Pancreas (tissue), 10 donors: ENCODE measurements at regions of chr1 and their contacts with region 1.

Region 1: GRCh38 chr1:25608488-25609178 is 8.0 kb upstream of the MAN1C1 start:
- DNase-seq: peak; percentile 71 to 89 (median 84)
- ATAC-seq: peak; percentile 91 to 99 (median 96)
- H3K4me3 ChIP-seq: peak overlapping the region in 1 of 4 donors; percentile 32
- H3K27ac ChIP-seq: no peak overlapping the region
- H3K4me1 ChIP-seq: no peaks in the 10 kb centered on the region
- H3K27me3 ChIP-seq: no peaks in the 10 kb centered on the region
- CTCF ChIP-seq: peak; percentile 22 to 53 (median 42)

Region 2: GRCh38 chr1:25754470-25755181 is 146.0 kb after region 1 on chr1:
- intact Hi-C with region 1: no loop called
- DNase-seq: no peak
- ATAC-seq: no peak
- H3K4me3 ChIP-seq: no peak overlapping the region
- H3K27ac ChIP-seq: no peak overlapping the region
- H3K4me1 ChIP-seq: peaks cover 0 to 4% (median 0%) of the 10 kb centered on the region in 3 donors
- H3K27me3 ChIP-seq: no peaks in the 10 kb centered on the region
- CTCF ChIP-seq: no peak

Region 3: DNA sequence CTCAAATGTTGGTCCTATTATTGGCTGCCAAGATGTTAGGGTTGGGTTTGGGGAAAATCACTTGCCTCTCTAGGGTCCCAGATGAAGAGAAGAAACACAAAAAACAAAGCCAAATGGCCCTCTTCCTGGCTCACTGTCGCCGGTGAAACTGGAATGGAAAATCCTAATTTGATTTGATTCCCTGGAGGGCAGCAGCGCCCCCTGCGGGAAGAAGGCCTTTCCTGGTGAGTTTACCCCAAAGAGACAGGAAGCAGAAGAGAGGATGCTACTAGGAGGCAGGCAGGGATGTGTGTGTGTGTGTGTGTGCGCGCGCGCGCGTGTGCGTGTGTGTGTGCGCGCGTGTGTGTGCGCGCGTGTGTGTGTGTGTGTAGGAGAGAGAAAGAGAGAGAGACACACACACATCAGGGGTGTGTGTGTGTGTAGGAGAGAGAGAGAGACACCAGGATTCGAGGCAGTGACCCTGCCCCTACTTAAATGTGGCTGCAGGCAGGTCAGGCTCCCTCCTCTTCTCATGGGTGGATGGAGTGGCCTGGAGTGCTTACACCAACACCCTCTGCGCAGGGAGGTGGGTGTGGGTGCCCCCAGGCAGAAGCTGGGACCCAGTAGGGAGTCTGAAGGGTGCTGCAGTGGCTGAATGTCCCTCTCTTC is 188.3 kb after region 1 on chr1:
- intact Hi-C with region 1: loop called in 2 of 3 experiments (anchors 5 kb)
- DNase-seq: peak; percentile 79 to 99 (median 92)
- ATAC-seq: peak; percentile 70 to 80 (median 76)
- H3K4me3 ChIP-seq: peak overlapping the region in 2 of 4 donors; percentile 12 to 30
- H3K27ac ChIP-seq: peak overlapping the region in 3 of 4 donors; percentile 50 to 85 (median 76)
- H3K4me1 ChIP-seq: peaks cover 3 to 21% (median 7%) of the 10 kb centered on the region in 3 donors
- H3K27me3 ChIP-seq: no peaks in the 10 kb centered on the region
- CTCF ChIP-seq: peak; percentile 63 to 77 (median 72)